ENCODE measurements at regions of chr3 and their contacts with region 1.

Region 1: GRCh38 chr3:45656575-45657363 is 32.4 kb upstream of the SACM1L start:
- DNase-seq: peak; percentile 92
- ATAC-seq: peak; percentile 95
- H3K4me3 Mint-ChIP-seq: no peak overlapping the region
- H3K27ac Mint-ChIP-seq: no peak overlapping the region
- H3K4me1 Mint-ChIP-seq: peaks cover 14% of the 10 kb centered on the region
- H3K27me3 Mint-ChIP-seq: no peaks in the 10 kb centered on the region

Region 2: GRCh38 chr3:45037734-45038455 is 618.9 kb before region 1 on chr3:
- CTCF ChIA-PET with region 1: interaction called, 28 read pairs
- POLR2A ChIA-PET with region 1: no interaction called
- DNase-seq: peak; percentile 96
- ATAC-seq: peak; percentile 82
- H3K4me3 Mint-ChIP-seq: no peak overlapping the region
- H3K27ac Mint-ChIP-seq: no peak overlapping the region
- H3K4me1 Mint-ChIP-seq: peaks cover 60% of the 10 kb centered on the region
- H3K27me3 Mint-ChIP-seq: peaks cover 7% of the 10 kb centered on the region

Region 3: DNA sequence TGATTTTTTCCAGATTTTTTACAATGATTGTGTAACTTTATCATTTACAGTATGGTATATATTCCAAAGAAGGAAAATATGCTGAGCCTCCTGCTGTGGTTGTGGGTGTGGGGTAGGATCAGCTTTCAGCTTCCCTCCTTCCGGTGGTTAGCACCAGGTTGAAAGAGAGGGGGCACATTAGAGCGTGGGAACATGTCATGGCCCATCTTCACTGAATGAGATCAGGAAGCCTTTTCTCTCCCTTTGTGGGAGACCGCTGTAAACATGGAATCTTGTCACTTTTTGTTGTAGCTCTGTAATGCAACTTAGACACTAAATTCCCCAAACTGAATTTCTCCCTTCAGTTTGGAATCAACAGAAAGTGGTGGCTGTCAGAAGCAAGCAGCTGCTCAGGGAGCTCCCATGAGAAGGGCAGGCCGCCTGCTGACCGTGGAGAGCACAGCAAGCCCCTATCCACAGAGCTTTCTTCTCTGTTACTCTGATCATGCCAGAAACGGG is 148.9 kb before region 1 on chr3:
- CTCF ChIA-PET with region 1: interaction called, 116 read pairs
- POLR2A ChIA-PET with region 1: interaction called, 4 read pairs
- DNase-seq: no peak
- ATAC-seq: peak; percentile 43
- H3K4me3 Mint-ChIP-seq: no peak overlapping the region
- H3K27ac Mint-ChIP-seq: no peak overlapping the region
- H3K4me1 Mint-ChIP-seq: peaks cover 2% of the 10 kb centered on the region
- H3K27me3 Mint-ChIP-seq: no peaks in the 10 kb centered on the region

Region 4: DNA sequence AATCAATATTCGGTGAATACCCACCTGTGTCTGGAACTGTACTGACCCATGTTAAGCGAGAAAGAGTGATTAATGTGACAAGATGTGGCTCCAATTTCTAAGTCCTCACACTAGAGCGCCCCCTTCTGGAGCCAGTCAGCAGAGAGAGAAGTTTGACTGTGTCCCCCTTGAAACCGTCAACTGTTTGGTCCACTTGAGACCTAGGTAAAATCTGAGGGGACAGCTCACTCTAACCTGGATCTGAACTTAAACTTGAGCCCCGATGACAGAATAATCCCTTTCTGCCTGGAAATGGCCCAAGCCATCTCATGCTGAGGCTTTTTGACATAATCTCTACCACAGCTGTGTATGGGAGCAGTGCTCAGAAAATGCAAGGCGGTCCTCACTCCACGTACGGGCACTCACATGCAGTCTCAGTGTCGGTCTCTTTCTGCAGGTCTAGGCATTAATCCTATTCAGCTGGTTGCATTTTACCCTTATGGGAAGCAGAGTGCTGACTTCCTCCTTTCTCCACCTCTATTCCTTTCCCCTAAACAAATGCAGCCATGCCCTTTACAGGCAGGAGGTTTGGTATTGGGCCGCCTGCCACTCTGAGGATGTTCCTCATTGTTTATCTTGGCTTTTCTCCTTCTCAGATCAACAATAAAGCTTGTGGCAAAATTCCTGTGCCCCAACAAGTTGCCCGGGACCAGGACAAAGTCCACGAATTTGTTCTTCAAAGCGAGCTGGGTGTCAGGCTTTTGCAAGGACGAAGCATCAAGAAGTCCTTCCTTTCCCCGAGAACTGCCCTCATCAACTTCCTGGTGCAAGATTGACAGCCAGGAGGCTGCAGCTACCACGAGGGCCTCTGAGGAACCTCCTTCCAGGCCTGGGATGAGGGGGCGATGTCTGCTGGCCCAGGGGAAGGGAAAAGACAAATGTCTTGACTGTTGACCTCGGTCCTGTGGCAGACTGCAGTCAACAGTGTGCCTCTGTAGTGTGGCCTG is 109.8 kb before region 1 on chr3:
- CTCF ChIA-PET with region 1: interaction called, 18 read pairs
- POLR2A ChIA-PET with region 1: no interaction called
- DNase-seq: peak; percentile 48
- ATAC-seq: no peak
- H3K4me3 Mint-ChIP-seq: no peak overlapping the region
- H3K27ac Mint-ChIP-seq: no peak overlapping the region
- H3K4me1 Mint-ChIP-seq: no peaks in the 10 kb centered on the region
- H3K27me3 Mint-ChIP-seq: no peaks in the 10 kb centered on the region

Region 5: DNA sequence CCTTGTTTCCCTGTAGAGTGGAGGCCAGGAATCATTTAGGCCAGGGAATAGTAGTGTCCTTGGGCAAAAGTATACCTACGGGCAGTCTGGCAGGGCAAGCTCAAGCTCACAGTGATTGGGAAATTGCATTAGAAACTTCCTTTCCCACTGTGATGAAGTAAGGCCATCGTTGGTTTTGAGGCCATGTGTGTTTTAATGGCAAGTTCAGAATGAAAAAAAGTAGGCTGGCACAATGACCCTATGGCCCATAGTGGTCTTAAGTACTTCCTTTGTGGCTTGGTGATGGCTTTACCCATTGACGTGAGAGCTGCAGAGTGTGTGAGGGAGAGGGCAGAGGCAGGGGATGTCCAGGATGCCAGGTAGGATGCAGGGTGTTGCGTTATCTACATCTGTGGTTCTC is 33.4 kb before region 1 on chr3:
- CTCF ChIA-PET with region 1: interaction called, 14 read pairs
- POLR2A ChIA-PET with region 1: no interaction called
- DNase-seq: no peak
- ATAC-seq: no peak
- H3K4me3 Mint-ChIP-seq: no peak overlapping the region
- H3K27ac Mint-ChIP-seq: no peak overlapping the region
- H3K4me1 Mint-ChIP-seq: peaks cover 3% of the 10 kb centered on the region
- H3K27me3 Mint-ChIP-seq: no peaks in the 10 kb centered on the region

Region 6: DNA sequence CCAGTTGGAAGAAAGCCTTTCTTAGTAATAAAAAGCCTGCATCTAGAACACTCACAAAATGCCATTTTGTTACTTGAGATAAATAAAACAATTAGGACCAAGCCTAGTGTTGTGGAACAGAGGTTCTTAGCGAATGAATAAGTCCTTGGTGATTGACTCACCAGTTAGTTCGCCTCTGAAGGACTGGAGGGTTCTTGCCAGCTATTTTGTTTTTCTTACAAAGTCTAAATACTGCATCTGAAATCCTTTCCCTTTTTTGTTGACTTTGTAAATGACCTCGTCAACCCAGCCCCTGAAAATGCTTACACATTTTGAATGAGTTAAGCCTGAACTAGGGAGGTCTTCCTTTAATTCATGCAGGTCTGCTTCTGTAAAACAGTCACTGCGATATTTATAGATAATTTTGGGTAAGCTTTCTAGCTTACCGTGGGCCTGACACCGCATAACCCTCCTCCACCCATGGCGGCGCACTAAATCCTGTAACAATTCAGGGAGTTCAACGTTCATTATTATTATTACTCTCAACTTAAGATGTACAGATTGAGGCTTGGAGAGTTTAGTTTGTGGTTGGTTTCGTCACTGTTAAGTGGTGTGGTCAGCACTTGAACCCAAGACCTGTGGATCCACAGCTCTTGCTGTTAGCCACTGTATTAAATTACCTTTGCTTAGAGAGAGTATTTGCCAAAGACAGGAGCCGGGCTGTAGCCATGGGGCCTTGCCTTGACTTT is 12.5 kb before region 1 on chr3:
- CTCF ChIA-PET with region 1: interaction called, 10 read pairs
- POLR2A ChIA-PET with region 1: no interaction called
- DNase-seq: no peak
- ATAC-seq: no peak
- H3K4me3 Mint-ChIP-seq: no peak overlapping the region
- H3K27ac Mint-ChIP-seq: no peak overlapping the region
- H3K4me1 Mint-ChIP-seq: peaks cover 8% of the 10 kb centered on the region
- H3K27me3 Mint-ChIP-seq: no peaks in the 10 kb centered on the region

Region 7: DNA sequence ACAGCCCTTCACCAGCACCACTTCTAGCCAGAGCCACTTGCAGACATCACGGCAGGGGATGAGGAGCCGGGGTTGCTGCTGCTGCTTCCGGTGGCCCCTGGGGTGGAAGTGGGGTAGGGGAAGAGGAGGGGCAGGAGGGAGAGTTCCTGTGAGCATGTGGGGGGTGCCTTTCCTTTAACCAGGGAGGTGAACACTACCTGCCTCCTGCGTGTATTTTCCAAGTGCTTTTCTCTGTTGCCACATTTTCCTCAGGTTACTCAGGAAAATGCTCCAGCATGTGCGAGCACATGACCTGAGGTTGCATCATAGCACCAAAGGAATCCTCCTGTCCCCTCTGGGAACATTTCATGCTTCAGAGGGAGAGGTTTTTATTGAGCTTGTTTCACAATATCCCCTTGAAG is 20.3 kb after region 1 on chr3:
- CTCF ChIA-PET with region 1: interaction called, 48 read pairs
- POLR2A ChIA-PET with region 1: no interaction called
- DNase-seq: peak; percentile 82
- ATAC-seq: peak; percentile 92
- H3K4me3 Mint-ChIP-seq: peak overlapping the region; percentile 76
- H3K27ac Mint-ChIP-seq: peak overlapping the region; percentile 97
- H3K4me1 Mint-ChIP-seq: peaks cover 45% of the 10 kb centered on the region
- H3K27me3 Mint-ChIP-seq: no peaks in the 10 kb centered on the region

Region 8: DNA sequence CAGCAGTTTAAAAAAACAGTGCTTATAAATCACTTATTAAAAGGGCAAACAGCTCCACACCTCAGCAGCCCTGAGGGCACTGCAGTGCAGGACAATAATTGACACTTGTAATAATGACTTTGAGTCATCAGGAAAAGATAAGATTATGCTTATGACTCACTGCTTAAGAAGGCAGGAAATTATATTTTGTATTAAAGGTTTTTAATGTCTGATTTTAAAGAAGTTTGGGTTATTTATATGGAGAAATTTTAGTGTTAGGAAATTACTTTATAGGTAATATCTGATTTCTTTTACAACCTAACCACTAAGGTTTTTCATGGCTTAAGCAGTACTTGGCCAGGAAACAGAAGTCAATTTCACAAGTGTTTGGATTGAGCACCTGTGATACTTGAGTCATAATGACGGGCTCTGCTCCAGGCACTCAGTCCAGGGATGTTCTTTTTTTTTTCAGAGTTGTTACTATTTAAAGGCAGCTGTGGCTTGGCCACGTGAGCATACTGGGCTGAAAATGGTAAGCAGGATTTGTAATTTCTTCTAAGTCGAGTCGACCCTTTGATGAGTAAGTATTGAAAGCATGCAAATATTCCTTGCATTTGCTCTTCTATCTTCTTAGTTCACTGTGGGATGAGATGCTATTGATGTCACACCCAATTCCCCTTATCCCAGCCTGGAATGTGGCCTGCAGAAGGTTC is 161.2 kb after region 1 on chr3:
- CTCF ChIA-PET with region 1: no interaction called
- POLR2A ChIA-PET with region 1: no interaction called
- DNase-seq: no peak
- ATAC-seq: no peak
- H3K4me3 Mint-ChIP-seq: no peak overlapping the region
- H3K27ac Mint-ChIP-seq: no peak overlapping the region
- H3K4me1 Mint-ChIP-seq: no peaks in the 10 kb centered on the region
- H3K27me3 Mint-ChIP-seq: peaks cover 3% of the 10 kb centered on the region

Measured in activated CD8-positive, alpha-beta T cell treated with anti-CD3 and anti-CD28 coated beads, Interleukin-2, amount 10 ng/mL, durations not matched to agents 7 days and 5 days (primary cell).